ENCODE measurements at regions of chr5 and their contacts with region 1.

Region 1: GRCh38 chr5:151252762-151253604 is at the start of gene GM2A:
- H3K4me3 ChIP-seq: peak within 1 kb of the TSS; percentile 52
- H3K27ac ChIP-seq: peak within 1 kb of the TSS; percentile 7; the same call in 1 of the 2 replicates
- H3K4me1 ChIP-seq: peaks cover 3% of the 10 kb centered on the region; the same call in 1 of the 2 replicates
- CTCF ChIP-seq: no peak

Region 2: DNA sequence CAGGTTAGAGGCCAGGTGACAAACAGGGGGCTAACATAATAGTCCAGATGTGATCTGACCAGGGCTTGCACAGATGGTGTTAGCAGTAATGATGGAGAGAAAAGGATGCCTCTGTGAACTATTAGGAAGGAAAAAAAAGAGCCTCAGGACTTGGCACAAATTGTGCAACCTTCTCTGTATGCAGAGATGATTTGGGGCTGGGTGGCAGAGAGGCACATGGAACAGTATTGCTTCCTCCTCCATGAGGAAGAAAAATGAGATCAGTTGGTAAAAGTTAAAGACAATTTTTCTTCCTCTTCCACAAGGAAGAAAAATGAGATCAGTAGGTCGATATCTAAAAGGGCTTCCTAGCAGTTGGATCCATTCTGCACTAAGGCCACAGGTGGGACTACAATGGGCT is 81.5 kb before region 1 on chr5:
- CTCF ChIA-PET with region 1: no interaction called
- POLR2A ChIA-PET with region 1: no interaction called
- H3K4me3 ChIP-seq: no peak overlapping the region
- H3K27ac ChIP-seq: no peak overlapping the region
- H3K4me1 ChIP-seq: no peaks in the 10 kb centered on the region
- CTCF ChIP-seq: no peak

Region 3: DNA sequence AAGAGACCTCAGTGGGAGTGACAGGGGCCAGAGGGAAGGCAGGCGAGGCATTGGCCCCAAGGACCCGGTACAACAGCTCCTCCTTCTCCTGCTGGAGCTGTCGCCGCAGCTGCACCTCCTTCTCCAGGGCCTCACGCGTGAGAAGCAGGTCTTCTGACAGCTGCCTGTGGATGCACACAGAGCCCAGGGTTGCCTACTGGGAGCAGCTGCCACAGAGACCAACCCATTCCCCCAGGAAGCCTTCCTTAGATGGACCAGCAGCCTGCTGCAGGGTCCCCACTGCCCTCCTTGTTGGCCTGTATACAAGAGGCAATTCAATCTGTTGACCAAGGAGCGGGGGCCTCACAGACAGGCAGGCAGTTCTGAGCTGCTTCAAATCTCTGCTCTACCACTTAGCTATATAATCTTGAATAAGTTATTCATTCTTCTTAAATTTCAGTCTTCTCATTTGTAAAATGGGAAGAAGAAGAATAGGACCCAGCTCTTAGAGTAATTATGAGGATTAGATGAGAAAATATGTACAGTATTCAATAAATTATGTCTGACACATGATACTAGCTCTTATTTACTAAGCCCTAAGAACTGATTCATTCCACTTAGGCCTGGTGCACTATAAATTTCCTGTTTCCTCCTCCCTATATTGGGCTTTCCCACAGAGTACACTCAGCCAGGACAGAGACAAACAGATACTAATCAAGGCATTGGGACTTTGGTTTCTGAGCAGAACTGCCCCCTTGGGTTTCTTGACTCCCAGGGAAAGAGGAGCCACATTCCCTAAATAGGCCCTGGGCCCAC is 69.3 kb before region 1 on chr5:
- CTCF ChIA-PET with region 1: no interaction called
- POLR2A ChIA-PET with region 1: no interaction called
- H3K4me3 ChIP-seq: no peak overlapping the region
- H3K27ac ChIP-seq: no peak overlapping the region
- H3K4me1 ChIP-seq: no peaks in the 10 kb centered on the region
- CTCF ChIP-seq: no peak

Region 4: GRCh38 chr5:151223469-151224264 is 29.3 kb before region 1 on chr5 and contains the start of gene CCDC69:
- CTCF ChIA-PET with region 1: interaction called, 3 read pairs
- POLR2A ChIA-PET with region 1: interaction called, 28 read pairs
- H3K4me3 ChIP-seq: peak within 1 kb of the TSS; percentile 48
- H3K27ac ChIP-seq: peak within 1 kb of the TSS; percentile 46; the same call in 1 of the 2 replicates
- H3K4me1 ChIP-seq: 0 out of 2 replicates have a peak, but pooled peaks cover 3% of the 10 kb centered on the region
- CTCF ChIP-seq: no peak

Region 5: DNA sequence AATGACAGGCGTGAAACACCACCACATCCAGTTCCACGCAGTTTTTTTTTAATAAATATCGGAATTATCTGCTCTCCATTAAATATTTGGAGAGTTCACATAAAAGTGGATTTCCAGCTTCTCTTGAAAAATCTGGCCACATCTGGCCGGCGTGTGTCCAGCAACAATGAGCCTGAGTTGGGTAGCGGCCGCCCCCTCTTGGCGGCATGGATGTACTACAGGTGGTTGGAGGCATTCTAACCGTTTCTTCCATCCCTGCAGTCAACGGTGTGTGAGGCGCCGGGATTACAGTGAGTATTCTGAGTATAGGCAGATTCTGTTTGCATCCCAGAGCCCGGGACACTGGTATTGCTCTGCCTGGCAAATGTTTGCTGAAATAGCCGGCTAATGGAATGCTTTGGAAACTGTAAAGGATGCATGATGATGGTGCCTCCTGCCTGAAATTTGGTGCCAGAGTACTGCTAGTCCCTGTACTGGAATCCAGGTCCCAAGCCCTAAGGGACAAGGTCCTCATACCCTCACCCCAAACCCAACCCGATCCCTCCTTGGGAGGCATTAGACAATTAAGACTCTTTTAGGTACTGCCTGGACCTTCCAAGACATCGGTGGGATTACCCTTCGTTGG is 13.6 kb before region 1 on chr5:
- CTCF ChIA-PET with region 1: interaction called, 7 read pairs
- POLR2A ChIA-PET with region 1: interaction called, 14 read pairs
- H3K4me3 ChIP-seq: no peak overlapping the region
- H3K27ac ChIP-seq: no peak overlapping the region
- H3K4me1 ChIP-seq: no peaks in the 10 kb centered on the region
- CTCF ChIP-seq: peak; percentile 61

Region 6: DNA sequence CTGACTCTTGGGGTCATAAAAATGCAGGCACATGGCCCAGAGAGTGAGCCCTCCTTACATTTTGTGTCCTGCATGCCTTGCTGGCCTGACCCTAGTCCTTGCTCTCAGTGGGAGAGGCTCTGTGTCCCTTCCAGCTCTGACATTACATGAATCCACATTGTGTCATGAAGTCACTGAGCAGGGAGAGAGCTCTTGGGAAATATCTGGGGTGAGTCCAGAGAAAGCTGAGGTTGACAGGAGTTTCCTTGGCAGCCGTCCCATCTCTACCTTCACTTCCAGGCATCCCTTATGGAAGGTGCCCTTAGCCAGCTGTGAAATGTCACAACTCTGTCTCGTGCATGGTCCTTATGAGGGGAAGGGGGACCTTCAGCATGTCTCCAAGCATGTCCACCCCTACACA is 297.2 kb after region 1 on chr5:
- CTCF ChIA-PET with region 1: no interaction called
- POLR2A ChIA-PET with region 1: no interaction called
- H3K4me3 ChIP-seq: no peak overlapping the region
- H3K27ac ChIP-seq: no peak overlapping the region
- H3K4me1 ChIP-seq: no peaks in the 10 kb centered on the region
- CTCF ChIP-seq: no peak

Measured in HEK293 (cell line).